WTC11 (cell line): ENCODE measurements at regions of chr7 and their contacts with region 1.

Region 1: DNA sequence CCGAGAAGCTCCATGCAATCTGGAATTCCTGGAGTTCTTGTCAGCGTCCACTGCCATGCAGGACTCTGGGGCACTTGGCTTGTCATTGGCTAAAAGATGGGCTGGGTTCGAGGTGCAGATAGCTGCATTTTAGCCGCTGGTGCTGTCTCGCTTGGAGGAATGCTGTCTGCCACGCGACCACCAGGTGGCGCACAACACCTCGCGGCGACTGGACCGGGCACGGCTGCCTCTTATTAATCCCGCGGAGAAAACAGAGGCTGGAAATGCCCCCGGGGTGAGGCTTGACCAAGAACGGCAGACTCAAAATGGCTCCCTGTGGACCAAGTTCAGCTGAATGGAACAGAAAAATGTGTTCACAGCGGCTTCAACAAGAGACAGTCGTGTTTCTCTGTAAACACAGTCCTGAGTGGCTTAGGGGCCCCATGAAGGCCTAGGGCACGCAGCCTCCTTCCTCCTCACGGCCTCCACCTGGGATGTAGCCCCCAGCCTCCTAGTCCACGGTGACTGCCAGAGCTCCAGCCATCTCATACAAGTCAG is 46.2 kb downstream of the AOC1 start:
- DNase-seq: peak; percentile 86
- ATAC-seq: peak; percentile 75
- H3K4me3 Mint-ChIP-seq: no peak overlapping the region
- H3K27ac Mint-ChIP-seq: no peak overlapping the region
- H3K4me1 Mint-ChIP-seq: peaks cover 37% of the 10 kb centered on the region
- H3K27me3 Mint-ChIP-seq: peaks cover 59% of the 10 kb centered on the region
- CTCF ChIP-seq: peak; percentile 90

Region 2: DNA sequence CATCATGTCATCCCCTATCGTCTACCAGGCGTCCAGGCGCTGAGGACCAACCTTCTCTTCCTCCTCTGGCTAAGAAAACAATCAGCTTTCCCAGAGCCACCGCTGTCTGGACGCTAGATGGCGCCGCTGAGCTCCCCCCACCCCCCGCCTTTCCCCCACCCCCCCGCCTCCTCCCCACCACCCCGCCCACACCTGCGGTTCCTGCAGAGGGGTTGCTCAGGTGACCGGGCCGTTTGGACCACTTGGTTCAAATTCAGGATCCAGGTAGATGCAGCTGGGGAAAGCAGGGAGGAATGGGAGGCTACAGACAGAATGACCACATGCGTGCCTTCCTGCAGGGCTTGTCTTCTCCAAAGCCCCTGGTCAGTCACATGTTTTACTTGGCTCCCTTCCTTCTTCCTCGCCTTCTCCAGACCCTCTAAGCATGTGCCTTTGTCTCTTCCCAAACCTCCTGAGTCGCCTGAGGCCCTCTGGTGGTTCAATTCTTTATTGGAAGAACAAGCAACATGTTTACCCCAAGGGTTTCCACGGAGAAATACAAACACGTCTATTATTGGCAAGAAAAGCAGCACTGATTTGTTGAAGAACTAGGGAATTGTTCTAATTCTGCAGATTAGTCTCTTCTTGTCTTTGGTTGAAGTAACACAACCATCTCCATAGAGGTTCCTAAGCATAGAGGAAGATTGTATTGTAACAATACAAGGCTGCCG is 21.6 kb before region 1 on chr7:
- CTCF ChIA-PET with region 1: interaction called, 38 read pairs
- POLR2A ChIA-PET with region 1: no interaction called
- DNase-seq: peak; percentile 69
- ATAC-seq: peak; percentile 88
- H3K4me3 Mint-ChIP-seq: peak overlapping the region; percentile 37
- H3K27ac Mint-ChIP-seq: peak overlapping the region; percentile 35; the same call in 1 of the 2 replicates
- H3K4me1 Mint-ChIP-seq: peaks cover 16% of the 10 kb centered on the region
- H3K27me3 Mint-ChIP-seq: peaks cover 8% of the 10 kb centered on the region; the same call in 1 of the 2 replicates
- CTCF ChIP-seq: peak; percentile 52

Region 3: GRCh38 chr7:150923196-150923595 is 24.7 kb after region 1 on chr7:
- CTCF ChIA-PET with region 1: interaction called, 14 read pairs
- POLR2A ChIA-PET with region 1: no interaction called
- DNase-seq: no peak
- ATAC-seq: no peak
- H3K4me3 Mint-ChIP-seq: no peak overlapping the region
- H3K27ac Mint-ChIP-seq: no peak overlapping the region
- H3K4me1 Mint-ChIP-seq: no peaks in the 10 kb centered on the region
- H3K27me3 Mint-ChIP-seq: no peaks in the 10 kb centered on the region
- CTCF ChIP-seq: no peak

Region 4: DNA sequence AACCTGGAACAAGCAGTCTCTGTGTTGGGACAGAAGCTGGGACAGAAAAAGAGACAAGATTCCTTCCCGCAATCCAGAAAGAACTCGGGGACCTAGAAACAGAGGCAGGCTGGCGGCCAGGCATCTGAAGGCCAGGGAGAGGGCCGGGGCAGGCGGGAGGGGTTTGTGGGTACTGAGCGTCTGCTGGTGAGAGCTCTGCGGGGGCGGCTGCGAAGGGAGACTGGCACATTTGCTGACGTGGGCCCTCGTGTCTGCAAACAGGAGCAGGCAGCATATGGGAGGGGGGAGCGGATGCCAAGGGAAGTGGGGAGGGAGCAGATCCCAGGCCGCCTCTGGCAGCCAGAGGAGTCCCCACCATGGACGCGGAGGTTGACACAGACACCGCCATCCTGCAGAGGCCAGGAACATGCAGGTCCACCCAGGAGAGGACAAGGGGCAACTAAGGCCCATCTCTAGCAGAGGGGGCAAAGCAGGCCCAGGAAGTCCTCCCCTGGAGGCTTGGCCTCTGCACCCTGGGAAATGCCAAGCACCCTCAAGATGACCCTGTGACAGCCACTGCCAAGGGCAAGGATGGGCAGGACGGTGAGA is 47.4 kb after region 1 on chr7:
- CTCF ChIA-PET with region 1: interaction called, 21 read pairs
- POLR2A ChIA-PET with region 1: no interaction called
- DNase-seq: no peak
- ATAC-seq: no peak
- H3K4me3 Mint-ChIP-seq: no peak overlapping the region
- H3K27ac Mint-ChIP-seq: no peak overlapping the region
- H3K4me1 Mint-ChIP-seq: peaks cover 48% of the 10 kb centered on the region
- H3K27me3 Mint-ChIP-seq: peaks cover 6% of the 10 kb centered on the region
- CTCF ChIP-seq: no peak

Region 5: GRCh38 chr7:150962553-150963399 is 64.2 kb after region 1 on chr7:
- CTCF ChIA-PET with region 1: interaction called, 40 read pairs
- POLR2A ChIA-PET with region 1: no interaction called
- DNase-seq: peak; percentile 83
- ATAC-seq: peak; percentile 93
- H3K4me3 Mint-ChIP-seq: no peak overlapping the region
- H3K27ac Mint-ChIP-seq: no peak overlapping the region
- H3K4me1 Mint-ChIP-seq: peaks cover 17% of the 10 kb centered on the region
- H3K27me3 Mint-ChIP-seq: no peaks in the 10 kb centered on the region
- CTCF ChIP-seq: peak; percentile 56

Region 6: DNA sequence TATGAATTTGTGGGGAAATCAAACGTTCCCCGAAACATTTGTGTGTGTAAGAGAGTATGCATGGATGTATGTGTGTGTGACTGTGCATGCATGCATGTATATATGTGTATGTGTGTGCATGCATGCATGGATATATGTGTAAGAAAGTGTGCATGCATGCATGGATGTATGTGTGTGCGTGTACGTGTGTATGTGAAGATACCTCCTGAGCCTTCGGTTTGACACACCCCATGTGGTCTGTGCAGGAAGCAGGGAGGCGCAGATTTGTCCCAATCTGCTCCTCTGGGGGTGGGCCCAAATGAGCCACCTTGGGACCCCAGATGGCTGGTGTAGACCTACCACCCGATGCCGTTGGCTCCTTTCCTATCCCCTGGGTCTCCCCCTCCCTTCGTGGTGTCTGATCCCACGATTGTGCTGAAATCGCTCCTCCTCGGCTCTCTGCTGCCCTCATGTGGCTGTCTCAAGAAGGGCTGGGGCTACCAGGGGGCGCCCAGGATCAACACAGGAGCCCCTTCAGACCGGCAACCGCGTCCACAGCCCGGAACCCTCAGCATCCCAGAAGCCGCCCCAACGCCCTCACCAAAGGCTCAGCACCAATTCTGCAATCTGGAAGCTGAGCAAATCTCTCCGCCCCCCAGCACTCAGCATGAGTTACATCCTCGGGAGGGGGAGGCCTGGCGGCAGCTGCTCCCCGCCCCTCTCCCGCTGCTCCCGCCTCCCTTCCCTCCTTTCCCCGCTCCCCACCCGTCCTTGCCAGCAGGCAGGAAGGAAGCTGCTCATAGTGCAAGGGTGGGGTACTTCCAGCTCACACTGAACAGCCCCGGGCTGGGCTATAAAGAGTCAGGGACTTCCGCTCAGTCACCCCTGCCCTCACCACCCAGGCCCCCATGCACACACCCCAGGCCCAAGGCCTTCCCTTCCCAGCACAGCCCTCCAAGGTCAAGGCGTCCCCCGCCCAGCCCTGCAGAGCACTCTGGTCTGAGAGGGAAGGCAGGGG is 90.0 kb after region 1 on chr7:
- CTCF ChIA-PET with region 1: interaction called, 26 read pairs
- POLR2A ChIA-PET with region 1: interaction called, 3 read pairs
- DNase-seq: peak; percentile 93
- ATAC-seq: peak; percentile 68
- H3K4me3 Mint-ChIP-seq: peak overlapping the region; percentile 71
- H3K27ac Mint-ChIP-seq: no peak overlapping the region
- H3K4me1 Mint-ChIP-seq: peaks cover 32% of the 10 kb centered on the region
- H3K27me3 Mint-ChIP-seq: peaks cover 32% of the 10 kb centered on the region
- CTCF ChIP-seq: peak; percentile 92

Region 7: DNA sequence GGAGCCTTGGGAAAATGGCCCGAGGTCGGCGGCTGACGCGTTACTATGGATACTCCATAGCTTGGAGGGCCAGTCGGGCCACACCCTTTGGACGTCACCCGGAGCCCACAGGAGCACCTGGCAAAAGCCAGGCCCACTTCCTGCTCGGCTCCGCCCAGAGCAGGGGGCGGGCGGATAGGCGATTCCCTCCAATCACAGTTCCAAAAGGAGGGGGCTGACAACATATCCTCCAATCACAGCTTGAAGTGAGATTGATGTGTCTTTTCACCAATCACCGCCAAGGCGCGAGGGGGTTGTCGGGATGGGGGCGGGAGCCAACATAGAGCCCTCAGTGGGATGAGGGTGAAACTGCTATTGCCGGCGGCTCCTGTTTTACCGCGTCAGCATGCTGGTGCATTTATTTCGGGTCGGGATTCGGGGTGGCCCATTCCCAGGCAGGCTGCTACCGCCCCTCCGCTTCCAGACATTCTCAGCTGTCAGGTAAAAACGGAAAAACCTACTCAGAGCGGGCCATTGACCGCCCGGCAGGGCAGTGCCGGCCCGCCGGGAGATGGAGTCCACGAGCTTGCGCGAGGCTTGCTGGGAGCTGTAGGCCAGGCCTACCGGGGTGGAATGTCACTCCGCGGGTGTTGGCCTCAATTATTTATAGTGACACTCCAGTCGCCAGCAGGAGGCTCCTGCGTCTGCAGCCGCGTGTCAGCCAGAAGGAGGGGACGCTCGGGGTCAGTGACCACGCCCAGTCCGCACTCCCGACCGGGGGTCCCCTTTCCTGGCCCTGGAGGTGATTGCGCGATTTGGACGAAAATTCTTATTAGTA is 129.8 kb after region 1 on chr7 and contains the start of gene ABCB8:
- CTCF ChIA-PET with region 1: no interaction called
- POLR2A ChIA-PET with region 1: no interaction called
- DNase-seq: peak; percentile 99
- ATAC-seq: peak; percentile 95
- H3K4me3 Mint-ChIP-seq: peak within 1 kb of the TSS; percentile 92
- H3K27ac Mint-ChIP-seq: peak within 1 kb of the TSS; percentile 99
- H3K4me1 Mint-ChIP-seq: peaks cover 24% of the 10 kb centered on the region
- H3K27me3 Mint-ChIP-seq: peaks cover 8% of the 10 kb centered on the region; the same call in 1 of the 2 replicates
- CTCF ChIP-seq: no peak
- total RNA-seq, gene ABCB8: 27.9 to 35.9 TPM (median 28.4 TPM) in 3 replicates